MCF 10A (cell line): ENCODE measurements at regions of chr6 and their contacts with region 1.

Region 1: DNA sequence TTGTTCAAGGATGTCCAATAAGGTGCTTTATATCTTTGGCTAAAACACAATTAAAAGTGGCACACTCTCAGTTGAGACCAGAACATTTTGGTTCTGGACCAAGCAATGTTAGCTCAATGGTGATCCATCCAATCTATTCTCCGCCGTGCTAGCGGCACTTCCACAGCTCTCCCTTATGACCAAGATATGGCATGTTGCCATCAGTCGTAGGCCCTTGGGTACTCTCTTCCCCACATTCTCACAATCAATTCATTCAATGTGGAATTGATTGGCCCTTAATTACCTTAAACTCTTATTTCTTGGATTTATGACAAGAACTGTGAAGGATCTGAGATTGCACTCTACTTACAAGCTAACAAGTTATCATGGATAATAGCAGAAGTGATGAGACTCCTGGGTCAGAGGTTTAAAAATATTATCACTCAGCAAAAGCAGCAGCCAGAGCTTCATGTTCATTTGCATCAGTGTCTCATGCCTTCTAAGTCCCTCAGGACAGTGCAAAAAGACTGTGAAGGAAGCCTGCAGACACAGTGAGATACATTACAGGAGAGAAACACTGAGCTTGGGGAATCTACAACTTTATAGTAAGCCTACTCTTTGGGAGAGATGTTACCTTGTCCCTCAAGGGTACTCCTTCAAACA is 80.0 kb upstream of the ARG1 start:
- DNase-seq: no peak
- H3K4me3 Mint-ChIP-seq: no peak overlapping the region
- H3K27ac Mint-ChIP-seq: no peak overlapping the region
- H3K4me1 Mint-ChIP-seq: no peaks in the 10 kb centered on the region
- H3K27me3 Mint-ChIP-seq: no peaks in the 10 kb centered on the region
- CTCF ChIP-seq: no peak

Region 2: DNA sequence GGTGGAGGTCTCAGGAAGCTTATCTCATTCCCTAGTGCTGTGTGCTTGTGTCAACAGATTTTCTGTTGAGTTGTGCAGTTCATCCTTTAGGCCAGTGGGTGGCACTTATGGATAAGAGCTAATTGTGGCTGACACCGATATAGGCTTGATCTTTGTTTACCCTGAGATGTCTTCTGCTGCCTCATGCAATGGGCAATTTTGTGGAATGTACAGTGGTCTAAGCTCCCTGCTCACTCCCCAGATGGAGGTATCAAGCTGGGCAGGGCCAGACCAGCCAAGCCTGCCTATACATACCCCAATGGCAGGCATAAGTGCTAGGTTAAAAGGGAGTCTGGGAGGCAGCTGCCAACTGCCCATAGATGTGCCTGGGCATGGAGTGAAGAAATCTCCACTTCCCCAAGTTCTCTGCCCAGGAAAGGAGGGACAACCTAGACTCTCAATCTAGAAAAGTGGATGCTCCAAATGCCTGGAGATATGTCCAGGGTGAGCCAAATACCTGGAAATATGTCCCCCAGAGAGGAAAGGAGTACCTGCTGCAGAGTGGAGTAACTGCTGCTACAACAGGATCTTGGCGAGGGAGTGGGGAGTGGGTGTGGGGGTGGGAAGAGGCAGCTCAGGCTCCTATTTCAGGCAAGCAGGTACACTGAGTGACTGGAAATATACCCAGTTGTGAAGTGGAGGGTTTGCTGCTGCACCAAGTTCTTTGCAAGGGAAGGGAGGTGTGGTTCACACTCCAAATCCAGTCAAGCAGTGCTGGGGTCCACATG is 26.8 kb after region 1 on chr6:
- CTCF ChIA-PET with region 1: interaction called, 11 read pairs
- POLR2A ChIA-PET with region 1: no interaction called
- intact Hi-C with region 1: no loop called
- DNase-seq: peak; percentile 58
- H3K4me3 Mint-ChIP-seq: no peak overlapping the region
- H3K27ac Mint-ChIP-seq: no peak overlapping the region
- H3K4me1 Mint-ChIP-seq: no peaks in the 10 kb centered on the region
- H3K27me3 Mint-ChIP-seq: no peaks in the 10 kb centered on the region
- CTCF ChIP-seq: peak; percentile 46

Region 3: DNA sequence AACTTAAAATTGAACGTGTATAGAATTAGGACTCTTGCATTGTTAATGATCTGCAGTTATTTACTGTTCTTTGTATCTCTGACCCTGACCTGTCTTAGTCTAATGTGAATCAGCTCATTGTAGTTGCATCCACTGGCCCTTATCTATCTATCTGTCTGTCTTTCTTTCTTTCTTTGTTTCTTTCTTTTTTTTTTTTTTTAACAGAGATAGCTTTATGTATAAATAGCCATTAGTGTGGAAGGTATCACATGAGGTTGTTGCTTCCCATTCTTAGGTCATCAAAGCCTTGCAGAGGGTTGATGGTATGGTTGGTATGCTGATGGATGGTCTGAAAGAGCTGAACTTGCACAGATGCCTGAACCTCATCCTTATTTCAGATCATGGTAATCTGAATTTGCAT is 374.7 kb after region 1 on chr6:
- CTCF ChIA-PET with region 1: no interaction called
- POLR2A ChIA-PET with region 1: no interaction called
- intact Hi-C with region 1: no loop called
- DNase-seq: no peak
- H3K4me3 Mint-ChIP-seq: no peak overlapping the region
- H3K27ac Mint-ChIP-seq: no peak overlapping the region
- H3K4me1 Mint-ChIP-seq: peaks cover 7% of the 10 kb centered on the region
- H3K27me3 Mint-ChIP-seq: no peaks in the 10 kb centered on the region
- CTCF ChIP-seq: no peak